ENCODE measurements at regions of chr1 and their contacts with region 1.

Region 1: DNA sequence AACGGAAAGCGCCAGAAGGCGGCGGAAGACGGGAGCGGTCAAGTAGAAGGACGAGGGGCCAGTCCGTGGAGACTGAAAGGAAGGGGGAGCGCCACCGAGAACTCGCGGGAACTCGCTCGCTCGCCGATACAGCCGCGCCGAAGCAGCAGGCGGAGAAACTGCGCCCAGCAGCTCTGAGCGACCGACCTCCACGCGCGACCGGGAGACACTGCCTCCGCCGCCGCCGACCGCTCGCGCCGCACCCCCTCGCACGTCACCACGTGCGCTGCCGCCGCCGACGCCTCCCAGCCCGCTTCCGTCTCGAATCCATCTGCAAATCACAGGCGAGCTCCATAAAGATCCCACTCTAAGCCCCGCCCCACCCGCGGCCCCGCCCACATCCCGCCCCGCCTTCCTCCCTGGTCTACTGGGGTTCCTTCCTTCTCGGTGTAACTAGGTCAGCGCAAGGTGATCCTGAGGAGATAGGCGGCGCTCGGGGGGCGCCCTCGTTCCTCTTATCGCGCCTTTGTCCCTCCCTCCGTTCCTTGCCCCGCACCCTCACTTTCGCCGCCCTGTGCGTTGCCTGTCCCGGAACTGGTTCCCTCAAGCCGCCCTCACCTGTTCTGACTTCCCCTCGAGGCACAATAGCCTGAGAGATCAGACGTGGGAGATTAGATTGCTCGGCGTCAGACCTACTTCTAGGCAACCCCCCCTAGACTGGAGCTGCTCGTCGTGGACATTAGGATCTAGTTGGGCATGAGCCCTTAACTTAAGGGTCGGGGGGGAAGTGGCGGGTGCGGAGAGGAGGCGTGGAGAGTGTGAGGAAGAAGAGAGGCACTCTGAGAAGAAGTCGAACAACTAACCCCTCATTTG is at the start of gene IVNS1ABP:
- DNase-seq: peak; percentile 86 to 97
- H3K4me3 ChIP-seq: peak within 1 kb of the TSS; percentile 87 to 98
- H3K27ac ChIP-seq: peak within 1 kb of the TSS; percentile 96 to 98
- H3K4me1 ChIP-seq: peaks cover 0 to 17% of the 10 kb centered on the region in 2 donors
- H3K27me3 ChIP-seq: no peaks in the 10 kb centered on the region
- CTCF ChIP-seq: peak in 2 of 3 experiments; percentile 12 to 35
- total RNA-seq, gene IVNS1ABP: 61.0 TPM

Region 2: DNA sequence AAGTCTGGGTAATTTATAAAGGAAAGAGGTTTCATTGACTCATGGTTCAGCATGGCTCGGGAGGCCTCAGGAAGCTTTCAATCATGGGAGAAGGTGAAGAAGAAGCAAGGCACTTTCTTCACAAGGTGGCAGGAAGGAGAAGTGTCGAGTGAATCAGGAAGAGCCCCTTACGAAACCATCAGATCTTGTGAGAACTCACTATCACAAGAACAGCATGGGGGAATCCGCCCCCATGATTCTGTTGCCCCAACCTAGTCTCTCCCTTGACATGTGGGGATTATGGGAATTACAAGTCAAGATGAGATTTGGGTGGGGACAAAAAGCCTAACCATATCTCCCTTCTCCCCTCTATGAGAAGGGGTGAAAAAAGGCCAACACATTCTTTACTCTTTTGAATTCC is 11.0 kb after region 1 on chr1:
- intact Hi-C with region 1: no loop called
- DNase-seq: no peak
- H3K4me3 ChIP-seq: no peak overlapping the region
- H3K27ac ChIP-seq: no peak overlapping the region
- H3K4me1 ChIP-seq: no peaks in the 10 kb centered on the region
- H3K27me3 ChIP-seq: no peaks in the 10 kb centered on the region
- CTCF ChIP-seq: no peak

Region 3: GRCh38 chr1:185360714-185361113 is 43.5 kb after region 1 on chr1:
- intact Hi-C with region 1: no loop called
- DNase-seq: no peak
- H3K4me3 ChIP-seq: no peak overlapping the region
- H3K27ac ChIP-seq: no peak overlapping the region
- H3K4me1 ChIP-seq: no peaks in the 10 kb centered on the region
- H3K27me3 ChIP-seq: no peaks in the 10 kb centered on the region
- CTCF ChIP-seq: no peak

Region 4: GRCh38 chr1:185681034-185681633 is 363.9 kb after region 1 on chr1:
- intact Hi-C with region 1: loop called (anchors 10 kb)
- DNase-seq: no peak
- H3K4me3 ChIP-seq: no peak overlapping the region
- H3K27ac ChIP-seq: no peak overlapping the region
- H3K4me1 ChIP-seq: no peaks in the 10 kb centered on the region
- H3K27me3 ChIP-seq: no peaks in the 10 kb centered on the region
- CTCF ChIP-seq: peak; percentile 39 to 54 (median 44)

Region 5: DNA sequence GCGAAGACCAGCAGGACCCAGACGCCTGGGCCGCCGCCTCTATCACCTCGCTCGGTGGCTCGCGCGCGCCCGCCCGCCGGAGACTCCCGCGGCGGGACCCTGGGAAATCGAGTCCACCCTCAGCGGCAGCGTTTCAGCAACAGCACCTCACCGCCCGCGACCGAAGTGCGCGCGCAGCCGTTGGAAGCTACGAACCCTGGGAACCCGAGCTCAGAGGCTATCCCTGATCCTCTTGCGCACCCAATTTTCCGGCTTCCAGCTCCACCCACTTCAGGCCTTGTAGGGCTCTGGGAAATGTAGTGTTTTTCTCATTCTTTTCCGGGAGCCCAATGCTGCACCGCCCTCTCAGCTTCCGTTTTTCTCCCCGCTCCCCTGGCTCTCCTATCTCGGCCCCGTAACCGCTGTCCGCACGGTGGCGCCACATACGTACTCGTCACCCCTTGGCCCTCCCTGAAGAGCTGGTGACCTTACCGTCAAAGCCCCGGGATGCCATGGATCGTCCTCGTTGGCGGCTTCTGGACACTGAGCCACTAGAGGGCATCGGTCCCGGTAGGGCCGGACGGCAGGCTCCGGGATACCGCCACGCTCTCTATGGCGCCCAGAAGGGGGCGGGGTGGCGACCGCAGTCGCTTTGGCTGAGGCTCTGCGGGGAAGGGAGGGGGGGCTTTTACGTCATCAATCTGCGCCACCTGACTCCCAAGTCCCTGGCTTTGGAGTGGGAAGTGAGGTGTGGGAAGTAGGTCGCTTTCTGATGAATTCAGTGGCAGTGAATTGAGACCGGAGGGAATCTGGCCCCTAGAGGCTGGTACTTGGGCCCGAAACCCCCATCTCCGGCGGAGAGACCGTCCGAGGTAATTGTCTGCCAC is 1058.1 kb after region 1 on chr1 and contains the starts of genes ODR4 and TPR:
- intact Hi-C with region 1: loop called (anchors 5 kb)
- DNase-seq: peak; percentile 94 to 99
- H3K4me3 ChIP-seq: peak within 1 kb of the TSS; percentile 74 to 94
- H3K27ac ChIP-seq: peak within 1 kb of the TSS; percentile 98 to 99
- H3K4me1 ChIP-seq: peaks cover 6 to 16% of the 10 kb centered on the region in 2 donors
- H3K27me3 ChIP-seq: no peaks in the 10 kb centered on the region
- CTCF ChIP-seq: peak; percentile 90 to 92 (median 91)
- total RNA-seq, gene ODR4: 5.5 TPM
- total RNA-seq, gene TPR: 35.7 TPM